Natural killer cell (primary cell): ENCODE measurements at regions of chr1 and their contacts with region 1.

Region 1: GRCh38 chr1:65958561-65959350 is 166.1 kb downstream of the PDE4B start:
- DNase-seq: peak in 1 of 2 donors; percentile 76
- ATAC-seq: peak; percentile 47 to 70 (median 64)
- H3K4me3 ChIP-seq: no peak overlapping the region
- H3K4me3 Mint-ChIP-seq: no peak overlapping the region
- H3K27ac ChIP-seq: no peak overlapping the region
- H3K27ac Mint-ChIP-seq: no peak overlapping the region
- H3K4me1 ChIP-seq: no peaks in the 10 kb centered on the region
- H3K4me1 Mint-ChIP-seq: no peaks in the 10 kb centered on the region
- H3K27me3 ChIP-seq: no peaks in the 10 kb centered on the region
- H3K27me3 Mint-ChIP-seq: peaks cover 0 to 8% of the 10 kb centered on the region in 2 donors
- CTCF ChIP-seq: peak; percentile 86

Region 2: DNA sequence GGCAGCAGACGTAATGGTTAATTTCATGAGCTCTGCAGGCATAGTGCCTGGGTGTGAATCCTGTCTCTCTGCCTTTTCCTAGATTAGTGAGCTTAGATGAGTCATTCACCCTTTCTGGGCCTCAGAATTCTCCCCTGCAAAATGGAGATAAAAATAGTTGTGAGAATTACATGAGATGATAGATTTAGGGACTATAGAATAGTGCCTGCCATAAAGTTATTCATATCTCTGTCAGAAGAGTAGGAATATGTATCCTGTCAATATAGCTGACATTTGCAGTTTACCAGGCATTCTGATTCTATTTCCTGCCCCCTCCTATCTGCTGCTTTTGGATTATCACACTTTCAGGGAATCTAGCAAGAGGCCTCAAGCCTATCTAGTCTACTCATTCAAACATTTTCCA is 54.1 kb before region 1 on chr1:
- intact Hi-C with region 1: no loop called
- DNase-seq: no peak
- ATAC-seq: no peak
- H3K4me3 ChIP-seq: no peak overlapping the region
- H3K4me3 Mint-ChIP-seq: no peak overlapping the region
- H3K27ac ChIP-seq: no peak overlapping the region
- H3K27ac Mint-ChIP-seq: no peak overlapping the region
- H3K4me1 ChIP-seq: no peaks in the 10 kb centered on the region
- H3K4me1 Mint-ChIP-seq: no peaks in the 10 kb centered on the region
- H3K27me3 ChIP-seq: no peaks in the 10 kb centered on the region
- H3K27me3 Mint-ChIP-seq: peaks cover 0 to 2% of the 10 kb centered on the region in 2 donors
- CTCF ChIP-seq: no peak

Region 3: DNA sequence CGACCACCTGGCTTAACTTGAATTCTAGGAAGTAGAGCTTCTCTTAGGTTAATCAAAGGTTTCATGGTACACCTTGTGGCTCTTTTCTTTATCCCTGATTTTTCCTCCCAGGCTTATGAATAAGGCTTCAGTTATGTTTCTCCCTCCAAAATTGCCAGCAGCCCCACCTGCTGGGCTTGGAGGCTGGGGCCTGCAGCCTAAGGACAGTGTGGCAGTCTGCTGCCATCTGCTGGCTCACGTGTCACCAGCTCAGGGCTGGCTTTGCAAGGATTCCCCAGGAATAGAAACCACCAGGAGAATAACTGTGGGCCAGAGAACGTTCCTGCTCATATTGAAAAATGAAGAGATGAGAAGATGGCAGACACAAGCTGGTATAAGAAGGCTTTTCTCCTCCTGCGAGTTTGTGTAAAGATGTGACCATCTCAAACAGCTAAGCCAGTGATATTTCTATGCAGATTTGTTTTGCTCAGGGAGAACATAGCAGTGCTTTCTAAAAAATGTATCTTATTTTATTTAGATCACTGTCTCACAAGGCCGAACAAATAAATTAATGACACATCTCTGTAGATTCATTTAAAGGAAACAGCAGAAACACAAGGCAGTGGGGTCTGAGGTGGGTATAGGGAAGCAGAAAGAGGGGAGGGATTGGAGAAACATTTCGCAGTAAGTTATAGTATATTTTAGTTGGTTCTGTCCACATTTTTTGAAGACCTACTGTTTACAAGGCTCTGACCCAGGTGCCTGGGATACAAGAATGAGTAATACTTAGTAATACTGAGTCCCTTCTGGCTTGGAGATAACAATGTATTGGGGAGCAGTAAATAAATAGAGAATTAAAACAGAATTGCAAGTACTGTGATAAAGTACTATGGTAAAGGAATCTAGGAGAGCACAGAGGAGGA is 284.1 kb after region 1 on chr1:
- intact Hi-C with region 1: loop called (anchors 1 kb)
- DNase-seq: peak; percentile 23 to 87
- ATAC-seq: peak; percentile 71 to 93 (median 77)
- H3K4me3 ChIP-seq: no peak overlapping the region
- H3K4me3 Mint-ChIP-seq: no peak overlapping the region
- H3K27ac ChIP-seq: no peak overlapping the region
- H3K27ac Mint-ChIP-seq: no peak overlapping the region
- H3K4me1 ChIP-seq: no peaks in the 10 kb centered on the region
- H3K4me1 Mint-ChIP-seq: peaks cover 0 to 4% of the 10 kb centered on the region in 2 donors
- H3K27me3 ChIP-seq: peaks cover 2% of the 10 kb centered on the region
- H3K27me3 Mint-ChIP-seq: peaks cover 6 to 8% of the 10 kb centered on the region in 2 donors
- CTCF ChIP-seq: peak; percentile 65

Region 4: DNA sequence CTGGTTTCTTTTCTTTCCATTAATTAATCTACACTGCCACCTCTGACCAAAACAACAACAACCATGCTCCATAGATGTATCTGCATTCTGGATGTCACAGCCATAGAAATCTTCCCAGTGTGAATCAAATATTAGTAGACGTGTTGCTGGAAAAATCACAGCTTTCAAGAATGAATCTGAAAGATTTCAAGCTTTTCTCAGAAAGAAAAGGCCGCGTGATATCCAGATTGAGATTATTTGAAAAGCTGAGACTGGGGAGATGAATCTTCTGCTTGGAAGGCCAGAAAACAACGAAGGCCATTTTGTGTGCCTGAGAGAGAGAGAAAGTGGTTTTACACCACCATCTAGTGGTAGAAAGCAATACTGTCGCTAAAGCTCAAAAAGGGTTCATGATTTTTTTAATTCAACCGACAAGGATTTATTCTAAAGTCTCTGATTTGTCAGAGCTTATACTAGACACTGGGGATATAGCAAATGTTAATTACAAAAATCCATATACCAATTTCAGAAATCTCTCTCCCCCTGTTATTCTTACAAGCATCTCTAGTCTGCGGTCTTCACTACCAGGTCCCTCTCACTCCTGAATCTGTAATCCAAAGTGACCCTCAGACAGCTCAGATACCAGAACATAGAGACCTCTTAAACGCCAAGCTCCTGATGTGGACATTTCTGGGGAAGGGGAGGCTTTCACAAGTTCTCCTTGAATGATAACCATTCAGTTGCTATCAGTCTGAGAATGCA is 487.7 kb after region 1 on chr1:
- intact Hi-C with region 1: loop called (anchors 1 kb)
- DNase-seq: peak in 1 of 2 donors; percentile 89
- ATAC-seq: peak; percentile 73 to 84 (median 80)
- H3K4me3 ChIP-seq: no peak overlapping the region
- H3K4me3 Mint-ChIP-seq: peak overlapping the region; percentile 43
- H3K27ac ChIP-seq: peak overlapping the region; percentile 56
- H3K27ac Mint-ChIP-seq: peak overlapping the region; percentile 65 to 75
- H3K4me1 ChIP-seq: peaks cover 10% of the 10 kb centered on the region
- H3K4me1 Mint-ChIP-seq: peaks cover 14% of the 10 kb centered on the region in 2 donors
- H3K27me3 ChIP-seq: no peaks in the 10 kb centered on the region
- H3K27me3 Mint-ChIP-seq: peaks cover 4 to 26% of the 10 kb centered on the region in 2 donors
- CTCF ChIP-seq: peak; percentile 74

Region 5: DNA sequence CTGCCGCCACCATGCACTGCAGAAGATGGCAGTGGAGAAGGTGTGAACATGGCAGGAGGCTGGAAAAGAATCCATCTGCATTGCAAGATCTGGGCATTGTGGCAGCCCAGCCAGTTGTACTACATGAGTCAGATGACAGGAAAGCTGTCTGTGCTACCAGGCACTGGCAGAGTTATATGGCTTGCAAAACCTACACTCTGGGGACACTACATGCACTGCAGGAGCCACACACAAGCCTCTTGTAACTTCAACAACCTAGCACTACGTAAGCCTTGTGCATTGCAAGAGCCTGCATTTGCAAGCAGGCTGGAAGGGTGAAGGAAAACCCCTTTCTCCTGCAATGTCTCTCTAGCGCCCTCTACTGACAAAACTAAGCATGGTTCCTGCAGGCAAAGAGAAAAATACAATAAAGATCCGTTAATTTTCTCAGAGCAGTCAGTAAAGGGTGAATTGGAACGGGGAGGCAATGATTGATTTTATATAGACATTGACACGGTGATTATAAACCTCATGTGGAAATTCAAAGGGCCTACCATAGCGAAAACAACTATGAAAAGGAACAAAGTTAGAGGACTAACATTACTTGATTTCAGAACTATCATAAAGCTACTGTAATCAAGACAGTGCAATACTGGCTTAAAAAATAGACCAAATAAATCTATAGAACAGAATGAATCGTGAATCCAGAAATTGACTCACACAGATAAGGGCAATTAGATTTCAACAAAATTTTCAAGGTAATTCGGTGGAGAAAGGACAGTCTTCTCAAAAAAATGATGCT is 767.3 kb after region 1 on chr1:
- intact Hi-C with region 1: loop called (anchors 5 kb)
- DNase-seq: peak; percentile 15 to 84
- ATAC-seq: peak; percentile 77 to 86 (median 81)
- H3K4me3 ChIP-seq: no peak overlapping the region
- H3K4me3 Mint-ChIP-seq: no peak overlapping the region
- H3K27ac ChIP-seq: no peak overlapping the region
- H3K27ac Mint-ChIP-seq: no peak overlapping the region
- H3K4me1 ChIP-seq: no peaks in the 10 kb centered on the region
- H3K4me1 Mint-ChIP-seq: peaks cover 5 to 9% of the 10 kb centered on the region in 2 donors
- H3K27me3 ChIP-seq: peaks cover 5% of the 10 kb centered on the region
- H3K27me3 Mint-ChIP-seq: peaks cover 14% of the 10 kb centered on the region in 2 donors
- CTCF ChIP-seq: peak; percentile 88